Testis (tissue), 5 donors: ENCODE measurements at regions of chr12 and their contacts with region 1.

Region 1: DNA sequence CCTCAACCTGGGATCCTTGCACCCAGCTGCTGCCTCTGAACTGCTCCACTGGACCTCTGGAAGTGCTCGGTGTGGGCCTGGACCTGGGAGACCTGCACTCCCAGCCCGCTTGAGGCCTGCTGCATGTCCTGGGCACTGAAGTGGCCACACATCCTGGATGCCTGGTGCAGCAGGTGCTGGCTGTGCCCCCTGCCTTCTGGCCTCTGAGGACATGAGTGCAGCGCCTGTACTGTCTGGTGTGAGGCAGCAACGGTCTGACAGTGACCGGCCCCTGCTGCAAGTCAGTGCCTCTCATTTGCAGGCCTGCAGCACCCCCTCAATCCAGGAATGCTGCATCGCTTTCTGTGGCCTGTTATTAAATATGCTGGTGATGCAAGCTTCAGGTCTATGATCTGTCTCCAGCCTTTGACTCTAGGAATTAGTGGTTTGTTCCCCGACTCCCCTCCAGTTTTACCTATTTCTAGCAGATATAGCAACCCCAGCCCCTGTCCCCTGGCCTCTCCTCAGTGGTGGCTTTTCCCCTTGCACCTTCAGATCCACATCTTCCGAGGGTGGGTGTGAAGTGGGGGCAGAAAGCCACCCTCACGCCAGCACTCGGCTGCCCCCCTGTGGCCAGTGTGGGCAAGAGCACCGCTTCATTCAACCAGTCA is 3.6 kb downstream of the SMIM41 start:
- DNase-seq: peak; percentile 55
- H3K4me3 ChIP-seq: no peak overlapping the region
- H3K27ac ChIP-seq: peak overlapping the region; percentile 80 to 87
- H3K4me1 ChIP-seq: peaks cover 49% of the 10 kb centered on the region
- H3K27me3 ChIP-seq: no peaks in the 10 kb centered on the region
- CTCF ChIP-seq: peak; percentile 91 to 98 (median 96)
- POLR2A ChIP-seq: no peak

Region 2: DNA sequence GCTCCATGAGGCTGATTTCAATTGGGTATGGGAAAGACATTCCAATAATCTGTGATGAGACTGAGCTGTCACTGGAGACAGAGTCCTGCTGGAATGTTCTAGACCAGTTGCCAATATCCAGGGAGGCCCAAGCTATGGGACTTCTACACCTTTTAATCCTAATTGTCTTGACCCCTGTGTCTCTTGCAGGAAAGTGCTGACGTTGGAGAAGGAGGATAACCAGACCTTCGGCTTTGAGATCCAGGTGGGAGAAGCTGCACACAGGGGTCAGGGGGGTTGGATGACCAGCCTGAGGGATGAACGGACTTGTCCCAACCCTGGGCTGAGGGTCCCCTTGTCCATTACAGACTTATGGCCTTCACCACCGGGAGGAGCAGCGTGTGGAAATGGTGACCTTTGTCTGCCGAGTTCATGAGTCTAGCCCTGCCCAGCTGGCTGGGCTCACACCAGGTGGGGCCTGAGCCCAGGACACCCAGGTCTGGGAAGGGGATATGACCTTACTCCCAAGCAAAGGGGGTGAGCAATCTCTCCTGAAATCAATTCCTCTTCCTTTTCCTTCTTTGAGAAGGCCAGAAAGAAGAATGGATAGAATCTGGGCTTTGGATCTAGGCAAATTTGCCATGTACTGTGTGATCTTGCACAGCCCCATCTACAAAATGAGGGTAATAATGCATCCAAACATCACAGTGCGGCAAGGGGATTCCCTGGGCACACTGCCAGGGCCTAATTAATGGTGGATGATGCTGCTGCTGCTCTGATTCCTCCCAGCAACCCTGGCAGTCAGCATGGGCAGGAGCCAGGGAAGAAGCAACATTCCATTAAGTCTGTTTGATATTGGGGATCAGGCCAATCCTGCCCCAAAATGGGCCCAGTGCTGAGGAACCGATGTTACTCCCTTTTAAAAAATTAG is 72.2 kb before region 1 on chr12:
- intact Hi-C with region 1: no loop called
- DNase-seq: no peak
- H3K4me3 ChIP-seq: no peak overlapping the region
- H3K27ac ChIP-seq: peak overlapping the region; percentile 94 to 96
- H3K4me1 ChIP-seq: peaks cover 42% of the 10 kb centered on the region
- H3K27me3 ChIP-seq: no peaks in the 10 kb centered on the region
- CTCF ChIP-seq: no peak
- POLR2A ChIP-seq: no peak

Region 3: GRCh38 chr12:52029686-52030085 is 53.4 kb before region 1 on chr12:
- intact Hi-C with region 1: loop called (anchors 5 kb)
- DNase-seq: no peak
- H3K4me3 ChIP-seq: no peak overlapping the region
- H3K27ac ChIP-seq: no peak overlapping the region
- H3K4me1 ChIP-seq: peaks cover 26% of the 10 kb centered on the region
- H3K27me3 ChIP-seq: no peaks in the 10 kb centered on the region
- CTCF ChIP-seq: no peak
- POLR2A ChIP-seq: no peak

Region 4: GRCh38 chr12:52203075-52203921 is 120.2 kb after region 1 on chr12:
- intact Hi-C with region 1: no loop called
- DNase-seq: no peak
- H3K4me3 ChIP-seq: no peak overlapping the region
- H3K27ac ChIP-seq: no peak overlapping the region
- H3K4me1 ChIP-seq: no peaks in the 10 kb centered on the region
- H3K27me3 ChIP-seq: no peaks in the 10 kb centered on the region
- CTCF ChIP-seq: no peak
- POLR2A ChIP-seq: no peak